ENCODE measurements at regions of chr9 and their contacts with region 1.

Region 1: GRCh38 chr9:121376214-121376830 is 6.3 kb upstream of the STOM start:
- DNase-seq: no peak
- ATAC-seq: no peak
- H3K4me3 Mint-ChIP-seq: no peak overlapping the region
- H3K27ac Mint-ChIP-seq: no peak overlapping the region
- H3K4me1 Mint-ChIP-seq: peaks cover 18% of the 10 kb centered on the region
- H3K27me3 Mint-ChIP-seq: peaks cover 21% of the 10 kb centered on the region

Region 2: GRCh38 chr9:121350993-121351561 is 25.2 kb before region 1 on chr9:
- CTCF ChIA-PET with region 1: interaction called, 13 read pairs
- POLR2A ChIA-PET with region 1: interaction called, 3 read pairs
- DNase-seq: peak; percentile 17
- ATAC-seq: no peak
- H3K4me3 Mint-ChIP-seq: no peak overlapping the region
- H3K27ac Mint-ChIP-seq: no peak overlapping the region
- H3K4me1 Mint-ChIP-seq: peaks cover 41% of the 10 kb centered on the region
- H3K27me3 Mint-ChIP-seq: no peaks in the 10 kb centered on the region

Region 3: GRCh38 chr9:121399883-121400607 is 23.7 kb after region 1 on chr9:
- CTCF ChIA-PET with region 1: interaction called, 15 read pairs
- POLR2A ChIA-PET with region 1: no interaction called
- DNase-seq: no peak
- ATAC-seq: peak; percentile 57
- H3K4me3 Mint-ChIP-seq: no peak overlapping the region
- H3K27ac Mint-ChIP-seq: no peak overlapping the region
- H3K4me1 Mint-ChIP-seq: peaks cover 7% of the 10 kb centered on the region
- H3K27me3 Mint-ChIP-seq: peaks cover 19% of the 10 kb centered on the region

Region 4: DNA sequence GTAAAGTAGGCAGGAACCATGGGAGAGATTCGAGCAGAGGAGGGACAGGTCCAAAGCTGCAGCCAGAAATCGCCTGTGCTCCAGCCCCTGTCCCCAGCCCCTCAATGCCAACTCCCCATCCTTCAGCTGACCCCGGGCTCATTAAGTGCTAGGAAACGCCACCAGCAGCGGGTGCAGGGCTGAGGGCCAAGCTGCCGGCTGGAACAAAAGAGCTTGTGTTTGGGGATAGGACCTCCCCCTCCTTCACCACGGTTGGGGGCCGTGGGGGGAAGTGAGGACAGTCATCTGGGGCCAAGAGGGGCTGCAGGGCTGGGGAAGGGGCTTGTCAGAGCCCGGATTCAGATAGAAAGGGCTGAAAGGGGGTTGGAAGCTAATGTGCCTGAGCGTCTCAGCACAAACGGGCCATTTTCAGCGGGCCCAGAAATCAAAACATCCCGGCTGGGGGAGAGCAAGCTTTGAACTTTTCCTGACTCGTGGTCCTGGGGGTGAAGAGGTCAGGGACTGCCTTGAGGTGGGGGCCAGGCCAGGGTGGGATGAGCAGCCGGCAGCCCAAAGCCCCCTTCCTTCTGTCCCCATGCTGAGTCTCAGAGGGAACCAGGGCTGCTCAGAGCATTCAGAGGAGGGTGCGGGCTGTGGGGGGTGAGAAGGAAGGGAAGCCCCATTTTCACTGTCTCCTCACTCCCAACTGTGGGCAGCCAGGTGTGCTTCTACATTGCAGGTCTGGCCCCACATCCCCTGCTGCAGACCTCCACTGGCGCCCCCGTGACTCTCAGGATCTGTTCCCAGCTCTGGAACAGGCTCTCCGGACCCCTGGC is 205.7 kb after region 1 on chr9:
- CTCF ChIA-PET with region 1: no interaction called
- POLR2A ChIA-PET with region 1: no interaction called
- DNase-seq: no peak
- ATAC-seq: no peak
- H3K4me3 Mint-ChIP-seq: no peak overlapping the region
- H3K27ac Mint-ChIP-seq: no peak overlapping the region
- H3K4me1 Mint-ChIP-seq: no peaks in the 10 kb centered on the region
- H3K27me3 Mint-ChIP-seq: peaks cover 10% of the 10 kb centered on the region

Measured in activated CD8-positive, alpha-beta T cell treated with anti-CD3 and anti-CD28 coated beads, Interleukin-2, amount 10 ng/mL, durations not matched to agents 7 days and 5 days (primary cell).